Activated CD4-positive, alpha-beta T cell treated with anti-CD3 and anti-CD28 coated beads, Interleukin-2, amount 10 ng/mL, durations not matched to agents 24 days and 14 days (primary cell): ENCODE measurements at regions of chr1 and their contacts with region 1.

Region 1: DNA sequence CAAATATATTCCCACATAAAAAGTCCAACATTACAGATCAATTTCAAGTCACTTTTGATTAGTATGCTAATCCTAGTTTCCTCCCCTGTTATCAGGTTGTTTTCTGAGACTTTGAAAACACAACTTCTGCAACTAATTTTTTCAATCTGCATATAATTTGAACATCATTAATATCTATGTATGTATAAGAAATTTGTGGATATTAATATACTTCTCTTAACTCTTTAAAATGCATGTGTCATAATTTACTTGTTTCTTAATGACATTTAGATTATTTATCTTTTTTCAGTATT is 48.6 kb downstream of the EXO1 start:
- DNase-seq: no peak
- H3K4me3 Mint-ChIP-seq: no peak overlapping the region
- H3K27ac Mint-ChIP-seq: no peak overlapping the region
- H3K4me1 Mint-ChIP-seq: no peaks in the 10 kb centered on the region
- H3K27me3 Mint-ChIP-seq: no peaks in the 10 kb centered on the region

Region 2: GRCh38 chr1:241998412-241998921 is 101.9 kb after region 1 on chr1:
- intact Hi-C with region 1: loop called (anchors 2 kb)
- DNase-seq: peak; percentile 84
- H3K4me3 Mint-ChIP-seq: peak overlapping the region; percentile 70
- H3K27ac Mint-ChIP-seq: no peak overlapping the region
- H3K4me1 Mint-ChIP-seq: peaks cover 6% of the 10 kb centered on the region
- H3K27me3 Mint-ChIP-seq: no peaks in the 10 kb centered on the region

Region 3: DNA sequence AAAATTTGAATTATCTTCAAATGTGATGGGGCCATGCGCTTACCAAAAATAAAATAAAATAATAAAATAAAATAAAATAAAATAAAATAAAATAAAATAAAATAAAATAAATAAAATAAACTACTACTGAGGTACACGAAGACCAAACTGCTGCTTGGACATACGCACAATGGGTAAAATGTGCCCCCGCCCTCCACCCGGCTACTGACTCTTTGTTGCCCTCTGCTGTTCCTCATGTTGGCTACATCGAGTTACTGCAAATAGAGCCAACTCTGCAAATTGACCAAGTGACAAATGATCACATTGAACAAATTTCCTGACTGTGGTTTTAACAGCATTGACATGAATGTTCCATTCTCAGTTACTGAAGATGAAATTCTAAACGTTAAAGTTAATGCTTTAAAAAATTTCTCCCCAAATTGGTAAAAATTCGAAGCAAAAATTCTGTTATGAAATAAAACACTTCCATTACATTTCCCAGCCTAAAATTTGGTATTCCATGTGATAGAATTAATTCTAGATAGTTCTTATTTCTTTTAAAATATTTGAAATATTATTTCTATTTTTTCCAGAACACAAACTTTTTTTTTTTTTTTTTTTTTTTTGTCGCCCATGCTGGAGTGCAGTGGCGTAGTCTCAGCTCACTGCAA is 121.1 kb after region 1 on chr1:
- intact Hi-C with region 1: loop called (anchors 2 kb)
- DNase-seq: peak; percentile 75
- H3K4me3 Mint-ChIP-seq: no peak overlapping the region
- H3K27ac Mint-ChIP-seq: no peak overlapping the region
- H3K4me1 Mint-ChIP-seq: no peaks in the 10 kb centered on the region
- H3K27me3 Mint-ChIP-seq: no peaks in the 10 kb centered on the region